HEK293 (cell line): ENCODE measurements at regions of chr11 and their contacts with region 1.

Region 1: GRCh38 chr11:64846998-64847666 is 2.7 kb upstream of the CDC42BPG start:
- H3K4me3 ChIP-seq: no peak overlapping the region
- H3K27ac ChIP-seq: no peak overlapping the region
- H3K4me1 ChIP-seq: no peaks in the 10 kb centered on the region; the same call in 1 of the 2 replicates
- CTCF ChIP-seq: peak; percentile 89

Region 2: DNA sequence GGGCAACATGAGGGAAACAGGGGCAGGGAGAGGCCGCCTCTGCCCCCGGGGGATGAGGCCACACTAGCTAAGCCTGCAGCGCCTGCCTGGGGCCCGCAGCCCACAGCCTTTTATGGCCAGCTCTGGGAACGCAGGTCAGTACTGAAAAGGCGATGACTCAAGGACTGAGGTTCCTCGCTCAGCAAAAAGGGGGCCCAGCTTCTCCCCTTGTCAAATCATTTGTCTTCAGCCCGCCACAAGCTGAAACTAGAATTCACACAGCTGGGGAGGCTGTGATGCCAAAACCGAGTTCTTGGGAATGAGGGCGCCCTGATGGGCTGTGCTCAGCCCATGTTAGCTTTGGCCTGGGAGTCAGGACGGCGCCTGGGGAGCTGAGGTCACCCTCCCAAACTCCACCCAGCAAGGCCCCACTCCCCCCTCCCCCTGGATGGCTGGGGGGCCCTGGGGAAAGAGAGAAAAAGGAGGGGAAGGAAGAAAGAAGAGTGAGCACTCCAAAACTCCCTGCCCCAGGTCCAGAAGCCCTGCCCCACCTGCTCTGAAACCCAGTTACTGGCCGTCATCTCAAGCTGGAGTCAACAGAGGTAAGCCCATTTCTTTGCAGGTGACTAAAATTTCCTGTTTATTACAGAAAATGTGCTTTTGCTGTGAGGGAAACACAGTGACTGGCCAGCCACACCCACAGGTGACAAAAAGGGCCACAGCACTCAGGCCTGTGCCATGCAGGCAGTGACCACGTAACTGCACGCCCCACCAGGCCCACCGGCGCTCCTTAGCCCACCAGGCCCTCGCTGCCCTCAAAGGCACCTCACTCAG is 17.5 kb after region 1 on chr11:
- CTCF ChIA-PET with region 1: interaction called, 22 read pairs
- POLR2A ChIA-PET with region 1: no interaction called
- H3K4me3 ChIP-seq: no peak overlapping the region
- H3K27ac ChIP-seq: no peak overlapping the region
- H3K4me1 ChIP-seq: no peaks in the 10 kb centered on the region
- CTCF ChIP-seq: no peak

Region 3: DNA sequence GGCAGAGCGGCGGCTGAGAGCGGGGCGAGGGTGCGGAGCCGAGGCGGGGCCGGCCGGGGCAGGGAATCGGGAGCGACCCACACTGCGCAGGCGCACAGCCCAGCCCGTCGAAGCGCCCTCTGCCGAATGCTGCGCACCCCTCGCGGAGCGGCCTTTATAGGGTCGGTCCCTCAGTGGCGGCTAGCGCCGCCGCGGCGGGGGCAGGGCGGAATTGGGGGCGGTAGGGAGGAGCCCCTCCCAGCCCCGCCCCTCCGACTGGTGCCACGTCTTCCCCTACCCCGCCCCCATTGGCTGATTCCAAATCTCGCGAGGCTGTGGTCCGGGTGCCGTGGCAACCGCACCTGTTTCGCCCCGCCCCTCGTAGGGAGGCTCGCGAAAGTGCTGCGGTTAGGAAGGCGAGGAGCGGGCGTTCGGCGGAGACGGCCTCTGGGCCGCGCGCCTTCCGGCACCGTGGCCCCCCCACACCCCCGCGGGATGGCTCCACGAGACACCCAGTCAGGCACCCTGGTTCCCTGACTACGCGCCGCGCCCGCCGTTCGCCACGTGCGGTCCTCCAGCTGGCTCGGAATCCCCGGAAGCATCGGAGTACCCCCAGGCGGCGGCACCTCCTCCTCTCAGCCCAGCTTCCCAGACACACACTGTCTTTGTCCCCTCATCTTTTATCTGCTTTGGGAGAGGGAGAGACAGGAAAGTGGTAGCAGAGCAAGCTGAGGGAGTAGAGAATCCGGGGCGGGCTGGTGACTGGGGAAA is 31.5 kb after region 1 on chr11 and contains the start of gene EHD1:
- CTCF ChIA-PET with region 1: interaction called, 27 read pairs
- POLR2A ChIA-PET with region 1: interaction called, 6 read pairs
- H3K4me3 ChIP-seq: peak within 1 kb of the TSS; percentile 85
- H3K27ac ChIP-seq: peak within 1 kb of the TSS; percentile 64; the same call in 1 of the 2 replicates
- H3K4me1 ChIP-seq: no peaks in the 10 kb centered on the region
- CTCF ChIP-seq: peak; percentile 89

Region 4: GRCh38 chr11:64887757-64888405 is 40.7 kb after region 1 on chr11:
- CTCF ChIA-PET with region 1: interaction called, 111 read pairs
- POLR2A ChIA-PET with region 1: interaction called, 3 read pairs
- H3K4me3 ChIP-seq: no peak overlapping the region
- H3K27ac ChIP-seq: no peak overlapping the region
- H3K4me1 ChIP-seq: no peaks in the 10 kb centered on the region
- CTCF ChIP-seq: peak; percentile 84

Region 5: DNA sequence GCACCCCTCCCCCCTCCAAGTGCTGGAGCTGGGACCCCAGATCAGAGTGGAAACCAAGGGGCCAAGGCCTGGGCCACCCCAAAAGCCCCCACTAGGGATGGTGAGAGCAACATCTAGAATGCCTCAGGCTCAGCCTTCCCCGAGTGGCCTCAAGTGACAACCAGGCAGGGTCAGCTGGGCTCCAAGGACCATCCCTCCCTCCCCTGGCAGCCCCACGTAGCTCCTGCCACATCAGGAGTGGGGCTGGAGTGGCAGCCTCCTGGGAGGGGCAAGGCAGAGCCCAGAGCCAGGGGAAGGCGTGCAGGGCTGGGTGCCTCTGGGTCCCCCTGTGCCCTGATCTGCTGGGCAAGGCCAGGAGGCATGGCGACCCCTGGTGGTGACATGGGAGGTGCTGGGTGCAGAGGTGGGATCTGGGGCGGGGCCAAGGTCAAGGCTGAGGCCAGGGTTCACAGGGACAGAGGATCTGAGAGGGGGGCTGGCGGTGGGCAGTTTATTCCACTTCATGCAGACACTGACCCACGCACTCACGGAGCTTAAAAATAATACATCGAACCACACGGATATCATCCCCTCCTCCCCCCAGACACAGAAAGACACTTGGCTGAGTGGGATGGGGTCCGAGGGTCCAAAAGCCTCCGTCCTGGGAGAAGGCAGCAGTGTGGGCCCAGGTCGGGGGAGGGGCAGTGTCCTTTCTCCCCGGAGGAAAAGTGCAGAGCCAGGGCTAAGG is 47.1 kb after region 1 on chr11:
- CTCF ChIA-PET with region 1: interaction called, 111 read pairs
- POLR2A ChIA-PET with region 1: interaction called, 3 read pairs
- H3K4me3 ChIP-seq: no peak overlapping the region
- H3K27ac ChIP-seq: no peak overlapping the region
- H3K4me1 ChIP-seq: no peaks in the 10 kb centered on the region
- CTCF ChIP-seq: peak; percentile 77

Region 6: DNA sequence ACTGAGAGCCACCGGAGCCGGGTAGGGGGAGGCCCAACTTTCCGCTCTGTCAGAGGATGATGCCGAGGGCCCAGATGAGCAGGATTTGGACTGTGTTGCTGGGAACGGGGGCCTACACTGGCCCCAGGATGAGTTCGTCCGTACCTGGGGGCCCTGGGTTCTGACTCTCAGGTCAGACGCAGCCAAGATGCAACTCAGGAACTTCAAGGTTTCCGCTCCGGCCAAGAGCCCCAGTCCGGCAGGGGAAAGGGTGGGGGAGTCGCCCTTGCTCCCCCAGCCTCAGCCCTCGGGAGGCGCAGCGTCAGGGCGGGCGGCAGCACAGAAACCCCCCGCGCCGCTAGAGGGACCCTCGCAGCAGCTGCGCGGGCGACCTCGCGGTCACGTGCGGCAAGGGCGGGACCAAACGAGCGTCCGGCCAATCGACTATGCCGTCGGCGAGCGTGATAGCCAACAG is 166.6 kb after region 1 on chr11:
- CTCF ChIA-PET with region 1: interaction called, 18 read pairs
- POLR2A ChIA-PET with region 1: no interaction called
- H3K4me3 ChIP-seq: peak overlapping the region; percentile 77
- H3K27ac ChIP-seq: peak overlapping the region; percentile 86; the same call in 1 of the 2 replicates
- H3K4me1 ChIP-seq: no peaks in the 10 kb centered on the region
- CTCF ChIP-seq: peak; percentile 97

Region 7: GRCh38 chr11:65117216-65118096 is 270.3 kb after region 1 on chr11 and contains the start of gene ZNHIT2:
- CTCF ChIA-PET with region 1: interaction called, 10 read pairs
- POLR2A ChIA-PET with region 1: interaction called, 3 read pairs
- H3K4me3 ChIP-seq: peak within 1 kb of the TSS; percentile 67
- H3K27ac ChIP-seq: peak within 1 kb of the TSS; percentile 78
- H3K4me1 ChIP-seq: peaks cover 6% of the 10 kb centered on the region
- CTCF ChIP-seq: peak; percentile 78